Posterior vena cava (tissue), 2 donors: ENCODE measurements at regions of chr6 and their contacts with region 1.

Region 1: DNA sequence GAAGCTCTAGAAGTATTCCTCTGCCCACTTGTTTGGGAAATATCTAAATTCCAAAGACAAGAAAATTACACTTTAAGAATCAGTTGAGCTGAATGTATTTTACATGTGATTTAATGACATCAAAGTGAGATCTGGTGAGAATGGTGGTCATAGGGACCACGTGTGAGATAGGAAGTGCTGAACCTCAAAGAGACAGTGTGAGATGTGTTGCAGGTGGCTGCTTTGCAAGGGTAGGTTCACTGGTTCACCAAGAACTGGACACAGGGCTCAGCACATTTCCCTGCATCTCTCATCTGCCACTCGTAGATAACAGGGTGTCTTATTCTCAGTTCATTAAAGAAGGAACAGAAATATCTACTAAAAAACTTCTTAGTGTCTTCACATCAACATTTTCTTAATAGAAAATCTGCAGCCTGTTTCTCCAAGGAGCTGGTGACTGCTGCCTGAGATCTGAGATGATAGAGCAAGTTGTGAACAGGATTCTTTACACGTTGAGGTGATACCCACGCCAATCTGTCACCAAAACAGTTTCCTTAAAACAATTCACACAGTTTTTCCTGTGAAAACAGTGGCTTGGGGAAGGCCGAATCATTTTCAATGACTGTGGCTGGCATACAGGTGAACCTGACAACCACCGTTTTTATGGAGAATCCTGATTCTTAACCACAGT is 7.2 kb downstream of the CCR6 start:
- DNase-seq: no peak

Region 2: GRCh38 chr6:166643891-166644590 is 486.1 kb before region 1 on chr6:
- intact Hi-C with region 1: no loop called
- DNase-seq: no peak

Region 3: GRCh38 chr6:167141667-167142432 is 11.7 kb after region 1 on chr6:
- intact Hi-C with region 1: loop called in 1 of 2 experiments (anchors 1 kb)
- DNase-seq: no peak

Region 4: DNA sequence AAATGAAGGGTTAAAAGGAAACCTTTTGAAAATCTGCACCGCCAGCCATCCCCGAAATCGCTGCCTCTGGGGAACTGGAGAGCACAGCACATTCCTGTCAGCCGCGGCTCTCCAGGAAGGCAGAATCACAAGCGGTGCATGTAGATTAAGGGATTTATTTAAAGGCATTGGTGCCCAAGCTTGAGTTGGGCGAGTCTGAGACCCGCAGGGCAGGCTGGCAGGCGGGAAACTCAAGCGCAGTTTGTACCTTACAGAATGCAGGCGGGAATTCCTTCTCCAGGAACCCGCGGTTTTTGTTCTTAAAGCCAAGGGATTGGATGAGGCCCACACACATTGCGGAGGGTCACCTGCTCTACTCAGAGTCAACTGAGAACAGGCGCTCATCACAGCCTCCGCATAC is 16.8 kb after region 1 on chr6:
- intact Hi-C with region 1: loop called in 1 of 2 experiments (anchors 1 kb)
- DNase-seq: no peak